Activated naive CD4-positive, alpha-beta T cell treated with anti-CD3 and anti-CD28 coated beads for 36 hours (primary cell): ENCODE measurements at regions of chr19 and their contacts with region 1.

Region 1: GRCh38 chr19:10142701-10143375 is 23.1 kb upstream of the EIF3G start:
- DNase-seq: peak; percentile 61
- H3K4me3 Mint-ChIP-seq: no peak overlapping the region
- H3K27ac Mint-ChIP-seq: peak overlapping the region; percentile 93
- H3K4me1 Mint-ChIP-seq: peaks cover 34% of the 10 kb centered on the region
- H3K27me3 Mint-ChIP-seq: no peaks in the 10 kb centered on the region

Region 2: GRCh38 chr19:10173257-10173926 is 30.6 kb after region 1 on chr19:
- CTCF ChIA-PET with region 1: no interaction called
- intact Hi-C with region 1: loop called (anchors 5 kb)
- DNase-seq: no peak
- H3K4me3 Mint-ChIP-seq: no peak overlapping the region
- H3K27ac Mint-ChIP-seq: peak overlapping the region; percentile 12
- H3K4me1 Mint-ChIP-seq: peaks cover 14% of the 10 kb centered on the region
- H3K27me3 Mint-ChIP-seq: no peaks in the 10 kb centered on the region